ENCODE measurements at regions of chr16 and their contacts with region 1.

Region 1: GRCh38 chr16:8293413-8293812 is 296.9 kb downstream of the TMEM114 start:
- DNase-seq: no peak
- H3K4me3 ChIP-seq: no peak overlapping the region
- H3K27ac ChIP-seq: no peak overlapping the region
- H3K4me1 ChIP-seq: no peaks in the 10 kb centered on the region
- H3K27me3 ChIP-seq: no peaks in the 10 kb centered on the region
- CTCF ChIP-seq: no peak

Region 2: GRCh38 chr16:8370374-8371270 is 77.2 kb after region 1 on chr16:
- CTCF ChIA-PET with region 1: no interaction called
- dilution Hi-C with region 1: loop called (anchors 5 kb)
- in situ Hi-C with region 1: no loop called
- intact Hi-C with region 1: no loop called
- DNase-seq: peak; percentile 2
- H3K4me3 ChIP-seq: no peak overlapping the region
- H3K27ac ChIP-seq: no peak overlapping the region
- H3K4me1 ChIP-seq: no peaks in the 10 kb centered on the region
- H3K27me3 ChIP-seq: no peaks in the 10 kb centered on the region
- CTCF ChIP-seq: no peak

Region 3: GRCh38 chr16:8430401-8430800 is 137.0 kb after region 1 on chr16:
- CTCF ChIA-PET with region 1: no interaction called
- dilution Hi-C with region 1: no loop called
- in situ Hi-C with region 1: no loop called
- intact Hi-C with region 1: no loop called
- DNase-seq: no peak
- H3K4me3 ChIP-seq: no peak overlapping the region
- H3K27ac ChIP-seq: no peak overlapping the region
- H3K4me1 ChIP-seq: no peaks in the 10 kb centered on the region
- H3K27me3 ChIP-seq: no peaks in the 10 kb centered on the region
- CTCF ChIP-seq: no peak

Region 4: DNA sequence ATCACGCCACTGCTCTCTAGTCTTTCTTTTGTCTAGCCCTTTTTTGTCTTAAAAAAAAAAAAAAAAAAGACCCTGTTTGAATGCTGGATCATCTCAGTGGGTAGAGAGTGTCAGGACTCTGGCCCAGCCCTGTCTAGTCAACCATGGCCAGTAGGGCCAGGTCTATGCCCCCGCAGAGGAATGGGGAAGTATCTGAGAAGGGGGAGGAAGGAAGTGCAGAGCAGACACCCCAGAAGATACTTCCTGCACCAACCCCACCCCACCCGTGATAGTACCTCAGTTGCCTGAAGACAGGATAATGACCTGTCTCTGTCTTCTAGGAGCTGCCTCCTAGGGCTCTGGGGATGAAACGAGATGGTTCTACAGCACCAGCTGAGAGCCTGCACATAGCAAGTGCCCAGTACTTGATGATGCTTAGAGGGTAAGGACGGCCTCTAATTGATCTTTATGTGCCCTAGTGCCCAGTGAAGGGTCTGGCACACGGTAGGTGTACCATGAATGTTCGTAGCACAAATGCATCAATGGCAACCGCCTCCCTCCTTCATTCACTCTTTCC is 436.4 kb after region 1 on chr16:
- CTCF ChIA-PET with region 1: no interaction called
- dilution Hi-C with region 1: no loop called
- in situ Hi-C with region 1: no loop called
- intact Hi-C with region 1: no loop called
- DNase-seq: no peak
- H3K4me3 ChIP-seq: no peak overlapping the region
- H3K27ac ChIP-seq: no peak overlapping the region
- H3K4me1 ChIP-seq: peaks cover 11% of the 10 kb centered on the region
- H3K27me3 ChIP-seq: no peaks in the 10 kb centered on the region
- CTCF ChIP-seq: no peak